ENCODE measurements at regions of chr3 and their contacts with region 1.

Region 1: DNA sequence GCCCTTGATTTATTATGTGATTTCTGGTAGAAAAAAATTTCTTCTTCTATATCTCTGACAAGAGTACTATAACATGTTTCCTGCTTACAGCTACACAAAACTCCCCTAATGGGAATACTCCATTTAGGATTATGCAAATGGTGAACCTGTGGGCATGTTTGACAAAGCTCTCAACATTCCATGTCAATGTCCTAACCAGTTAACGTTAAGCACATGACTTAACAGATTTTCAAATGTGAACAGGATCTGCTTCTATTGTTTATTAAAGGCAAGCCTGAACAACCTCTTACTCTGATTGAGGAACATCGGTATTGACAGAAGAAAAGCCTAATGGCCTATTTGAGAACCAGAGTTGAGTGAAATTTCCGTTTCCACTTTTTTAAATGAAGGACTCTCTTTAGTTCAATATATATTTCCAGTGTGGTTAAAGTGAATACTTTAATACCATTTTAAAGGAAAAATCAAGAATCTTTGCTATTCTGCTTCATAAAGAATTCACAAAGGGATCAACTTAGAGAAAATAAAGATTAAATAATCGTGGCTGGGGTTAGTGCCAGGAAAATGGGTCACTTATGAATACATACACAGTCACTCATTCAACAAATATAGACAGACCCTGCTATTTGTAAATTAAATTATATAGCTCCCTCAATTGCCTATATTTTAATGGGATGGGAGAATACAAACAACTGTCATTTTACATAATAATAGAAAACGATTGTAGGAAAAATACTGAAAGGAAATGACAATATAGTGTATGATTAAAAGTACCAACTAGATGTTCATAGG is 300.3 kb upstream of the CBLB start:
- DNase-seq: no peak
- H3K4me3 Mint-ChIP-seq: no peak overlapping the region
- H3K27ac Mint-ChIP-seq: no peak overlapping the region
- H3K4me1 Mint-ChIP-seq: peaks cover 51% of the 10 kb centered on the region
- H3K27me3 Mint-ChIP-seq: no peaks in the 10 kb centered on the region

Region 2: GRCh38 chr3:106215047-106215446 is 45.9 kb after region 1 on chr3:
- intact Hi-C with region 1: no loop called
- DNase-seq: peak; percentile 5
- H3K4me3 Mint-ChIP-seq: peak overlapping the region; percentile 43
- H3K27ac Mint-ChIP-seq: peak overlapping the region; percentile 82
- H3K4me1 Mint-ChIP-seq: peaks cover 56% of the 10 kb centered on the region
- H3K27me3 Mint-ChIP-seq: no peaks in the 10 kb centered on the region

Region 3: GRCh38 chr3:106326941-106327695 is 158.0 kb after region 1 on chr3:
- intact Hi-C with region 1: loop called (anchors 1 kb)
- DNase-seq: no peak
- H3K4me3 Mint-ChIP-seq: peak overlapping the region; percentile 39
- H3K27ac Mint-ChIP-seq: peak overlapping the region; percentile 5
- H3K4me1 Mint-ChIP-seq: peaks cover 43% of the 10 kb centered on the region
- H3K27me3 Mint-ChIP-seq: no peaks in the 10 kb centered on the region

Measured in activated T-helper 1 cell treated with anti-CD3 and anti-CD28 coated beads, Interleukin-12 subunit alpha, Interleukin-12 subunit beta, Interleukin-2, Interleukin-4 antibody, amounts not matched to agents 30 ng/mL and 10 ng/mL and 1 ng/mL, durations not matched to agents 14 hours and 24 hours and 36 hours (primary cell).